H1 (cell line): ENCODE measurements at regions of chr1 and their contacts with region 1.

Region 1: DNA sequence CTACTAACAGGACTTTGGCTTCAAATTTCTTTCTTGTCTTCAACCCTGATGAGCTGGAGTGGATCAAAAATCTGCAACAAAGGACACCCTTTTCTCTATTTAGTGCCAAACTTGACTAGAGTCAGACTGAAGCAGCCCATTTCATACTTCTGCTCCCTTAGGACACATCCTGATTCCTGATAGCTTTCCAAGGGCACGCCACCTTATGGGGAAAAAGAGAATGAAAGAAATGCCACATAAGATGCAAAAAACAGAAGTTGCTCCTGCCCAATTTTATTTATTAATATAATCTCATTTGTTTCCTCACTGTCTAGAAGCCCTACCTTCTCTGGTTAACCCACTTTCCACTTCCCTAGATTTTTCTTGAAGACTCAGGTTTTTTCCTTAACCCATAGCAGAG is 72.7 kb upstream of the NBPF4 start:
- DNase-seq: no peak
- H3K4me3 ChIP-seq: no peak overlapping the region
- H3K27ac ChIP-seq: no peak overlapping the region
- H3K4me1 ChIP-seq: no peaks in the 10 kb centered on the region
- H3K27me3 ChIP-seq: no peaks in the 10 kb centered on the region
- CTCF ChIP-seq: peak in 2 of 3 experiments; percentile 49 to 55; a peak in 2 of 4 replicates
- EP300 ChIP-seq: no peak
- POLR2A ChIP-seq: no peak
- RAD21 ChIP-seq: peak; percentile 44 to 54

Region 2: DNA sequence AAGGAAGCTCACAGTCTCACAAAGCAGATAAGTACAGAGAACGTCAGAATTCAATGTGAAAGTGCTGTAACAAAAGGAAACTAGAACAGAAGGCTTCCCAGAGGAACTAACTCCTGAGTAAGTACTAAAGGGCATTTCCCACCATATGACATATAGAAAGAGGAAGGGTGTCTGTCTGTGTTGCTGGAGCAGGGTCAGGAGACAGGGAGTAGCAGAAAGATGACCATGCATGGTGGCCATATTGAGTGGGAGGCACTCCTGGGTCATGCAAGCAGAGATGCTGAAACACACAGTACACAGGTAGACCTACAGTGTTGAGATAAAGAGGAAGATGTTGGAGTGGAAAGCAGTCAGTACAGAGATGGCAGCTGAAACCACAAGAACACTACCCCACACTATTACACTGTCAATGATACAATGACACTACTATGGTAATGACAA is 163.7 kb before region 1 on chr1:
- CTCF ChIA-PET with region 1: no interaction called
- POLR2A ChIA-PET with region 1: no interaction called
- DNase-seq: no peak
- H3K4me3 ChIP-seq: no peak overlapping the region
- H3K27ac ChIP-seq: no peak overlapping the region
- H3K4me1 ChIP-seq: no peaks in the 10 kb centered on the region
- H3K27me3 ChIP-seq: no peaks in the 10 kb centered on the region
- CTCF ChIP-seq: no peak
- EP300 ChIP-seq: no peak
- POLR2A ChIP-seq: no peak
- RAD21 ChIP-seq: no peak

Region 3: GRCh38 chr1:108327534-108328462 is 11.3 kb after region 1 on chr1:
- CTCF ChIA-PET with region 1: interaction called, 13 read pairs
- POLR2A ChIA-PET with region 1: no interaction called
- DNase-seq: peak; percentile 36 to 53
- H3K4me3 ChIP-seq: no peak overlapping the region
- H3K27ac ChIP-seq: no peak overlapping the region
- H3K4me1 ChIP-seq: no peaks in the 10 kb centered on the region
- H3K27me3 ChIP-seq: no peaks in the 10 kb centered on the region
- CTCF ChIP-seq: peak; percentile 66 to 90 (median 83)
- EP300 ChIP-seq: no peak
- POLR2A ChIP-seq: no peak
- RAD21 ChIP-seq: peak; percentile 92 to 93

Region 4: GRCh38 chr1:108345787-108346517 is 29.4 kb after region 1 on chr1:
- CTCF ChIA-PET with region 1: no interaction called
- POLR2A ChIA-PET with region 1: no interaction called
- DNase-seq: no peak
- H3K4me3 ChIP-seq: no peak overlapping the region
- H3K27ac ChIP-seq: no peak overlapping the region
- H3K4me1 ChIP-seq: no peaks in the 10 kb centered on the region
- H3K27me3 ChIP-seq: no peaks in the 10 kb centered on the region
- CTCF ChIP-seq: no peak
- EP300 ChIP-seq: no peak
- POLR2A ChIP-seq: no peak
- RAD21 ChIP-seq: no peak